ENCODE measurements at regions of chr12 and their contacts with region 1.

Region 1: GRCh38 chr12:13100882-13101769 is 2.3 kb downstream of the GSG1 start:
- DNase-seq: peak; percentile 86
- H3K4me3 ChIP-seq: peak overlapping the region; percentile 46 to 48
- H3K27ac ChIP-seq: peak overlapping the region; percentile 94 to 95
- H3K4me1 ChIP-seq: peaks cover 17% of the 10 kb centered on the region
- H3K27me3 ChIP-seq: no peaks in the 10 kb centered on the region
- CTCF ChIP-seq: peak in 1 of 4 experiments; percentile 21
- POLR2A ChIP-seq: peak; percentile 34

Region 2: GRCh38 chr12:13203034-13203922 is 102.2 kb after region 1 on chr12:
- intact Hi-C with region 1: loop called (anchors 5 kb)
- DNase-seq: no peak
- H3K4me3 ChIP-seq: no peak overlapping the region
- H3K27ac ChIP-seq: no peak overlapping the region
- H3K4me1 ChIP-seq: no peaks in the 10 kb centered on the region
- H3K27me3 ChIP-seq: no peaks in the 10 kb centered on the region
- CTCF ChIP-seq: no peak
- POLR2A ChIP-seq: no peak

Region 3: DNA sequence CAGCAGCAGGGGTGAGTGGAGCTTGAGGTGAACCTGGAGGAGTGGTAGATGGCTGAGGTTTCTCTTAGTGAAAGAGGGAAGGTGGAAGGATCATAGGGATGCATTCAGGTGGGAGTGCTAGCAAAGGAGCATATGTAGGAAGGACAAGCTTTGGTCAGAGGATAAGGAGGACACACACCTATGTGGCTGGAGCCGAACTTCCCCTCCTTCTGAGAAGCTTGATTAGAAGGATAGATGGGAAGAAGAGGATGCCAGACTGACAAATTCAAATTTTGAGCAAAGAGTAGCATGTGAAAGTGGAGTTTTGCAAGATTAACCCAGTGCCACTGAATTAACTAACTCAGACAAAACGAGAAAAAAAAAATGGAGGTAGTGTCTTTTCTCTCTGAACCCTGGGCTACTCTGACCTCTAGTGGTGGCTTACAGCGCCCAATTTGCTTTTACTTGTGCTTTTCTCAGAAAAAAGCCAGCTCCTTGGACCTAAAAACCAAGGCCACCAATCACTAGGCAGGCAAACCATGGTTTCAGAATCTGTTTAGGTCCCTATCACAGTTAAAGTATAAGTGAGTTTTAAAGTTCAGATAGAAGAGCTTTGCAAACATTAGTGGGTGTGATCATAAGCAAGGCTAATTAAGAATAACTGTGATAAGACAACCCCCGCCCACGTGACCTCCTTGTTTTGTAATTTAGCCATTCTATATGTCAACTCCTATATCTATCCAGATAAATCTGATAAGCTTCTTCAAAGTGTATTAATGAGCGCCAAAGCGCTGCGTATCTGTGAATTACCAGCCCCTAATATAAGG is 110.9 kb after region 1 on chr12:
- intact Hi-C with region 1: loop called (anchors 2 kb)
- DNase-seq: peak; percentile 58
- H3K4me3 ChIP-seq: no peak overlapping the region
- H3K27ac ChIP-seq: no peak overlapping the region
- H3K4me1 ChIP-seq: no peaks in the 10 kb centered on the region
- H3K27me3 ChIP-seq: no peaks in the 10 kb centered on the region
- CTCF ChIP-seq: peak; percentile 43 to 80 (median 80)
- POLR2A ChIP-seq: no peak